Activated naive CD4-positive, alpha-beta T cell treated with anti-CD3 and anti-CD28 coated beads, Interleukin-2, amount 10 ng/mL, durations not matched to agents 7 days and 5 days (primary cell): ENCODE measurements at regions of chr6 and their contacts with region 1.

Region 1: GRCh38 chr6:152948150-152948768 is 34.6 kb downstream of the FBXO5 start:
- DNase-seq: no peak
- H3K4me3 Mint-ChIP-seq: no peak overlapping the region
- H3K27ac Mint-ChIP-seq: no peak overlapping the region
- H3K4me1 Mint-ChIP-seq: peaks cover 4% of the 10 kb centered on the region
- H3K27me3 Mint-ChIP-seq: peaks cover 3% of the 10 kb centered on the region

Region 2: GRCh38 chr6:152863618-152864326 is 84.5 kb before region 1 on chr6:
- CTCF ChIA-PET with region 1: interaction called, 14 read pairs
- DNase-seq: peak; percentile 72
- H3K4me3 Mint-ChIP-seq: no peak overlapping the region
- H3K27ac Mint-ChIP-seq: no peak overlapping the region
- H3K4me1 Mint-ChIP-seq: no peaks in the 10 kb centered on the region
- H3K27me3 Mint-ChIP-seq: peaks cover 4% of the 10 kb centered on the region

Region 3: GRCh38 chr6:152893187-152893586 is 55.1 kb before region 1 on chr6:
- CTCF ChIA-PET with region 1: no interaction called
- DNase-seq: no peak
- H3K4me3 Mint-ChIP-seq: no peak overlapping the region
- H3K27ac Mint-ChIP-seq: no peak overlapping the region
- H3K4me1 Mint-ChIP-seq: no peaks in the 10 kb centered on the region
- H3K27me3 Mint-ChIP-seq: peaks cover 5% of the 10 kb centered on the region

Region 4: DNA sequence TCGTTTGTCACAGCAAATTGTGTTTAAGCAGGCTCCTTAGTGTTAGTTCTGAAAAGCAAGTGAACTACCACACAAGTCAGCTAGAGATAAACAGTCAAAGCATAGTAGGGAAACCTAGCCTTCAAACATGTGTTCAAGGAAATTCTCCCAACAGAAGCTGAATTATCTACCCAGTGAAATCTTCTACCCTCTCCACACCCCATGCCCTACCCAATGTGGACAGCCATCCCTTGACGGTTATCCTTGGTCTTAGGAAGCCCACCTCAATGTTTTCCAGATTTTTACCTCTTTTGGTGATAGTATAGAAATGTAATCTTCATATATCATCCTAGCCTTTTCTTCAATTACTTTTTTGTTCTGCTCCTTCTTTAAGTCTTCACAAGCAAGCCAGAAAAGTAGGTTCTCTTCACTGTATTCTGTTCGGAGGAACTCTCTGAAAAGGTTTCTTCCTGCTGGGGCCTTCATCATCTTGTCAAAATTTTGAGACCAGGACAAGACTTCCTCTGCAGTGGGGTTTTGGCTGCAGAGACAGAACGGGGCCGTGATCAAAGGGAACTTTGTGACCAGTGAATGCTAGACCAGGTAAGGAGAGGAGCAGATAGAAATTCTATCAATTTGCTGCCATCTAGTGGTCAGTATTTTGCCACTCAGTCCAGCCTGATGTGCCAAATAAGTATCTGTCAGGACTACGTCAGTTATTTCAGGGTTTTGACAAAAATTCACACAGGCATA is 75.9 kb after region 1 on chr6:
- CTCF ChIA-PET with region 1: interaction called, 18 read pairs
- DNase-seq: peak; percentile 50
- H3K4me3 Mint-ChIP-seq: no peak overlapping the region
- H3K27ac Mint-ChIP-seq: no peak overlapping the region
- H3K4me1 Mint-ChIP-seq: no peaks in the 10 kb centered on the region
- H3K27me3 Mint-ChIP-seq: peaks cover 12% of the 10 kb centered on the region